ENCODE measurements at regions of chr15 and their contacts with region 1.

Region 1: DNA sequence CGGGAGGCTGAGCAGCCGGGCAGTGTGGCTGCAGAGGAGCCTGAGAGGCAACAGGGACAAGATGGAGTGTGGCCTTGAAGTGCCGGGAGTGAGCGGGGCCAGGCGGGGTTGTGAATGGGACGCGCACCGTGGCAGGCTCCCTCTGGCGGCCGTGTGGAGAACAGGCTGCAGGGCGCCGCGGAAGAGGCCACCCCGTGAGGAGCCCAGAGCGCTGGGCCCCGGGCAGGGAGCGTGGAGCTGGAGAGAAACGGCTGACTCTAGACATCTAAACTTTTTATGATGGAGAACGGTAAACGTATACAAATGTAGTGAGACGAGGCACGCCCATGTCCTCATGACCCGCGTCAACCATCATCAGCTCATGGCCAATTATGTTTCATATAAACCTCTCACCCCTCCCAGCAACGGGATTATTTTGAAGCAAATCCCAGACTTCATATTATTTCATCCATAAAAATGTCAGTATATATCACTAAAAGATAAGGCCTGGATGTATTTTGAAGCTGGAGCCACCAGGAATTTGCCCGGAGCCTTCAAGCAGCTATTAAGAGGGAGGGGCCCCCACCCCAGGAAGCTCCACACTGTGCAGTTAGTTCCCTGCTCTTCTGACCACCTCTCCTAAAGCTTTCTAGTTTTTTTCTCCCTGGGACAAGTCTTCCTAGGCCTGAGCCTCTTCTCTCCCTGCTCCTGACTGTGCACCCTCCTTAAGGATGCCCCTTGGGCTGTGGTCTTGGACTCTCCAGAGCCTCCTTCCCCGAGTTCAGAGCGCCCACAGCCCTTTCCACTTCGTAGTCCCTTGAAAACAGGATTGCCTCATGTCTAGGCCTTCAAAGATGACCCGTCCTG is 149.4 kb downstream of the SMAD6 start:
- DNase-seq: peak in 1 of 2 experiments; percentile 71
- H3K4me3 ChIP-seq: no peak overlapping the region
- H3K27ac ChIP-seq: no peak overlapping the region
- H3K4me1 ChIP-seq: peaks cover 13% of the 10 kb centered on the region; the same call in 1 of the 2 replicates
- H3K27me3 ChIP-seq: no peaks in the 10 kb centered on the region
- CTCF ChIP-seq: peak; percentile 86

Region 2: DNA sequence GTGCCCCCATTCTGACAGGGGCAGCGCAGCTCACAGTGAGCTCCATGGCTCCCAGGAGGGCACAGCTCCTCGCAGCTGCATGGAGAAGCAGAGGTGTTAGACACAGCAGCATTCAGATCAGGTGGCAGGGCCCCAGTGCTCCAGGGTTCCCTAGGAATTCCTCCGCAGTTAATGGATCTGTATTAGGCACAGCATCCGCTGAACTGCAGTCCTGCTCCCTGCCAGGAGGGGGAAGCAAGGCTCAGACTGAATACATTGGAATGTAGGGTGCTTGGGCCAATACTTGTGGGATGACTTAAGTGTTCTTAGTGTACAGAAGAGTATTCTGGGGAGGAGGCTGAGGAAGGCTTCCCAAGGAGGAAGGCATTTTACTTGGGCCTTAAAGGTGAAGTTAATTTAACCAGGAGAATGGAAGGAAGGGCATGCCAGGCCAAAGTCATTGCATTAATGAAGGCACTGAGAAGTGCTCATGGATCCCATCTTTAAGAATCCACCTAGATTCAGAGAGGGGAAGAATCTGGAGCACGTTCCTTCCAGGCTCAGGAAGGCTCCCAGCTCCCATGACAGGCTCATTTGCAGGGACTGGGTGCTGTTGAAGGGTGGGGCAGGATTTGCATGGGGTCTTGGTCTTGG is 870.5 kb before region 1 on chr15:
- CTCF ChIA-PET with region 1: no interaction called
- POLR2A ChIA-PET with region 1: no interaction called
- intact Hi-C with region 1: no loop called
- DNase-seq: peak; percentile 51 to 68
- H3K4me3 ChIP-seq: no peak overlapping the region
- H3K27ac ChIP-seq: no peak overlapping the region
- H3K4me1 ChIP-seq: no peaks in the 10 kb centered on the region
- H3K27me3 ChIP-seq: 0 out of 2 replicates have a peak, but pooled peaks cover 4% of the 10 kb centered on the region
- CTCF ChIP-seq: peak; percentile 78

Region 3: DNA sequence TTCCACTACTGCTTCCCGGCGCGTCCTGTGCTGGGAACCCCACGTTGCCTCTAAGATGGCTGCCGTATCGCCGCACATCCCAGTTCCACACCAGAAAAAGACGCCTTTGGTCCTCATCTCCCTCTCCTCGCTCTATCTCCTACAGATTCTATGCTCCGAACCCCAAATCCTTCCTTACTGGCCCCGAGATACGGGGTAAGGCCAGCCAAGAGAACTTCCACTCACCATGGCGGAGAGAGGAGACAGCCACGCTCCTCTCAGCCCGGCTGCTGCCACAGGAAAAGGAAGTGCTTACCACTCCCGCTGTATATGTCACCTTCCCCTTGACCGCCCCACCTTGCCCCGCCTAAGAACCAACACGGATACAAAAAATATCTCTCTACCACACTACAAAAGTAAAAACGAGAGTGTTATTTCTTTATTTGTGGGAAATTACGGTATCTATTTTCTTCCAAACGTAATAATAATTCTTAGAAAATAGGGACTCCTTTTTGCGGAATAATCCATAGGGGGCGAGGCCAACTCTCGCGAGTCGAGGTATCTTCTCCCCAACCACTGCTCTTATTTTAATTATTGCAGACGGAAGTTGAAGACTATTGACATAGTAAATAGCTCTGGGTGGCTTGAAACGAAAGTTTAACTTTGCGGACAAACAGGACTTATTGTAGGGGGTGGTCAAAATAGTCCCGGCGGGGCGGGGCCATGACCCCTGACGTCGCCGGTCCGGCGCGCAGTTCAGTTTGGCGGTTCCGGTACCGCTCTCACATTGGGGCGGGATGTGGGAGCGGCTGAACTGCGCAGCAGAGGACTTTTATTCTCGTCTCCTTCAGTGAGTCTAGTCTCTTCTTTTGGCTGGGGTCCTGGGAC is 346.7 kb before region 1 on chr15 and contains the starts of genes RPL4 and ZWILCH:
- CTCF ChIA-PET with region 1: no interaction called
- POLR2A ChIA-PET with region 1: no interaction called
- intact Hi-C with region 1: loop called (anchors 5 kb)
- DNase-seq: peak; percentile 59 to 84
- H3K4me3 ChIP-seq: peak within 1 kb of the TSS; percentile 100
- H3K27ac ChIP-seq: peak within 1 kb of the TSS; percentile 91
- H3K4me1 ChIP-seq: peaks cover 11% of the 10 kb centered on the region
- H3K27me3 ChIP-seq: no peaks in the 10 kb centered on the region
- CTCF ChIP-seq: no peak
- total RNA-seq, gene RPL4: 1,859 and 2,320 TPM in 2 replicates
- total RNA-seq, gene ZWILCH: 26.3 and 30.3 TPM in 2 replicates

Region 4: DNA sequence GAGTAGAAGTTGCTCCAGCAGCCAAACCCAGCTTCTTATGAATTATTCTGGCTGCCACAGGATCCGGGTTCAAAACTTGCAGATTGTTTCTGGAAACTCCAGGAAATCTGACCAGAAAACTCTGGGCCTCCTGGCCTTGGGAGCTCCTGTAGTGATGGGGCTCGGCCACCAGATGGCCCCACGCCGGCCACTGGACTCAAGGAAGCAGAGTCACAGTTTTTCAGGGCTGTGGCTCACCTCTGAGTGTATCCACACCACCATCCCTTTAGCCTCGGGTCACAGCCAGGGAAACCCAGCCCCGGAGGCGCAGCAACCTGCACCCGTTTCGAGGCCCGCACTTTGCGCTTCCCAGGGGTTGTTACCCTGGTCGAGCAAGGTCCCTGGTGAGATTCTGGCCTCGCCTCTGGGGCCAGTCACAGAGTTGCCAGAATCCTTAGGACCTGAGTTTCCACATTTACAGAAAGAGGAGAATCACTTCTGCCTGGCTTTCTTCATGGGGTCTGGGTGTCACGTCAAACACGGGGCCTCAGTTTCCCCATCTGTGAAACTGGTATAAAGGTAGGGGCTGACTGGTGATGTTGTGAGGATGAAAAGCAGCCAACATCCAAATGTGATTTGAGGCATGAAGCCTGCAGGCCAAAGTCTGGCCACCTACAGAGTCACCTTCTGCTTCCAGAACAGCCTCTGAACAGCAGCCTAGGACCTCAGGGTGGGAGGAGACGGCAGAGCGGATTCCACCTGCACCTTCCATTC is 232.1 kb before region 1 on chr15:
- CTCF ChIA-PET with region 1: interaction called, 7 read pairs
- POLR2A ChIA-PET with region 1: interaction called, 4 read pairs
- intact Hi-C with region 1: loop called (anchors 1 kb)
- DNase-seq: peak; percentile 65 to 82
- H3K4me3 ChIP-seq: no peak overlapping the region
- H3K27ac ChIP-seq: no peak overlapping the region
- H3K4me1 ChIP-seq: peaks cover 4% of the 10 kb centered on the region; the same call in 1 of the 2 replicates
- H3K27me3 ChIP-seq: no peaks in the 10 kb centered on the region
- CTCF ChIP-seq: peak; percentile 80

Region 5: GRCh38 chr15:66774001-66774814 is 77.2 kb before region 1 on chr15:
- CTCF ChIA-PET with region 1: interaction called, 5 read pairs
- POLR2A ChIA-PET with region 1: no interaction called
- intact Hi-C with region 1: loop called (anchors 1 kb)
- DNase-seq: peak; percentile 66 to 92
- H3K4me3 ChIP-seq: no peak overlapping the region
- H3K27ac ChIP-seq: no peak overlapping the region
- H3K4me1 ChIP-seq: peaks cover 27% of the 10 kb centered on the region
- H3K27me3 ChIP-seq: no peaks in the 10 kb centered on the region
- CTCF ChIP-seq: peak; percentile 94

Region 6: DNA sequence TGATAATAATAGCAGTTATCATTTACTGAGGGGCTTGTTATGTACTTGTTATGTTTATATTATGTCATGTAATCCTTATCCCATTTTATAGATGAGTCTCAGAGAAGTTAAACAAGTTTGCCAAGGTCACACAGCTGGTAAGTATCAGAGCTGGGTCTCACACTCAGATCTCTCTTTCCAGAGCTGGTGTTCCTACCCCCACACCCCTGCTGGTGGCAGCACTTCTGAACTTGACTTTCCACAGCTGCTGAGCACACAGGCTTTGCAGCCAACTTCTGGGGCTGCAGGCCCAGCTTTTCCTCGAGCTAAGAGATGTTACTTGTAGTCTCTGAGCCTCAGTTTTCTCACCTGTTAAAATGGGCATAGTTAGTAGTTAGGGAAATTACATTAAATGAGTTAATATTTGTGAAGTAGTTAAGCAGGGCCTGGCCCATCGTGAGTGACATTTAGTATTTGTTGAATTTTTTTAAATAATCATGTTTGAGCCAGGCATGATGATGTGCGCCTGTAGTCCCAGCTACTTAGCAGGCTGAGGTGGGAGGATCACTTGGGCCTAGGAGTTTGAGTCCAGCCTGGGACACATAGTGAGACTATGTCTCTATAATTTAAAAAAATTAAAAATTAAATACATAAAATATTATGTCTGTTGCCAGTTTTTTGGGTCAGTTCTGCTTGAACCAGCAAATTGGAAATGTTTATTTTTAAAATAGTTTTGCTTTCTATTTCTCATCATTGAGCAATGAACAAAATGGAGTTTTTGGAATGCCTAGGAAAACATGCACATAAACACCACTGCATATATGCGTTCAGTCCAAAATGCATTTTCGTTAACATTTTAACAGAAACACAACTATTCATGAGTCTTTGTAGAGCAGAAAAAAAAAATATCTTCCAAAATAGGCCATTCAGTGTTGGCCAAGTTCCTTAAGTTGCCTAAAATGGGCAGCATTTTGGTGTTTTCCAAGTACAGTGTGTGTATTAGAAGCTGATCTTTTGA is 62.1 kb before region 1 on chr15:
- CTCF ChIA-PET with region 1: interaction called, 12 read pairs
- POLR2A ChIA-PET with region 1: no interaction called
- intact Hi-C with region 1: loop called (anchors 2 kb)
- DNase-seq: no peak
- H3K4me3 ChIP-seq: no peak overlapping the region
- H3K27ac ChIP-seq: no peak overlapping the region
- H3K4me1 ChIP-seq: no peaks in the 10 kb centered on the region
- H3K27me3 ChIP-seq: no peaks in the 10 kb centered on the region
- CTCF ChIP-seq: peak; percentile 59

Region 7: DNA sequence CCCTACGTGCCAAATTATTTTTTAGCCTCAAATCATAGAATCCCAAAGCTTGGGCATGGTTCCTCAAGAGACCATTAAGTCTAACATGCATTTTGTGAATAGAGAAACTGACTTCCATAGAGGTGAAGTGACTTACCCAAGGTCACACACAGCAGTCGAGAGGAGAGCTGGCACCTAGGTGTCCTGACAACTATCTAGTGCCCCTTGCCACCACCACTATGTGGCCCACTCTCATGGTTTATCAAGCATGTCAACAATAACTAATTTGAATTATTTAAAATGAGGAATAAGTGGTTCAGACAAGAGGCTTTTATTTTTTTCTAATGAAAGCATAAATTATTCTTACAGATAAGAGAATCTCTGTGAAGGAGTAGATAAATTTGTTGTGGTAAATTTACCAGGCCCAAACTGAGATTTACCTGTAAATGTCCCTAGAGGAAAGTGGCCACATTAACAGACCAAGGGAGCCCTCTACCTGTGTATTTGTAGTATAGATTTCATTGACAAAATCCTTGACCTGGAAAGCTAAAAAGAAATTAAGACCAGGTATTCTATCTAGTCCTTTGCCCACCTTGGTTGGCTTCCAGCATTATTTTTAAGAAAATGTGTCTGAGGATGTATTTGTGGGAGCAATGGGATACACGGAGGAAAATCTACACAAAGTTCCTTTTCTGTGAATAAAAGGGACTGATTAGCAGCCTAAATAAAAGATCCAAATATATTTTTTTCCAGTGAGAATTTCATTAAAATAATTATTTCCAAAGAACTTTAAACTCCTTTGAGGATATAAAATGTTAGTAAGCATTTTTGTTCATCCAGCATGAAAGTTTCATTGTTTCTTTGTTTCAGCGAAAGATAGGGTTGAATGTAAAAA is 452.3 kb after region 1 on chr15:
- CTCF ChIA-PET with region 1: no interaction called
- POLR2A ChIA-PET with region 1: no interaction called
- intact Hi-C with region 1: loop called (anchors 5 kb)
- DNase-seq: no peak
- H3K4me3 ChIP-seq: no peak overlapping the region
- H3K27ac ChIP-seq: no peak overlapping the region
- H3K4me1 ChIP-seq: no peaks in the 10 kb centered on the region
- H3K27me3 ChIP-seq: no peaks in the 10 kb centered on the region
- CTCF ChIP-seq: peak; percentile 66